Tibial artery (tissue), 4 donors: ENCODE measurements at regions of chr9 and their contacts with region 1.

Region 1: GRCh38 chr9:83336706-83337105 is 201.5 kb downstream of the FRMD3 start:
- DNase-seq: no peak
- H3K4me3 ChIP-seq: no peak overlapping the region
- H3K27ac ChIP-seq: no peak overlapping the region
- H3K4me1 ChIP-seq: peaks cover 0 to 16% (median 0%) of the 10 kb centered on the region in 4 donors
- H3K27me3 ChIP-seq: no peaks in the 10 kb centered on the region
- CTCF ChIP-seq: no peak

Region 2: DNA sequence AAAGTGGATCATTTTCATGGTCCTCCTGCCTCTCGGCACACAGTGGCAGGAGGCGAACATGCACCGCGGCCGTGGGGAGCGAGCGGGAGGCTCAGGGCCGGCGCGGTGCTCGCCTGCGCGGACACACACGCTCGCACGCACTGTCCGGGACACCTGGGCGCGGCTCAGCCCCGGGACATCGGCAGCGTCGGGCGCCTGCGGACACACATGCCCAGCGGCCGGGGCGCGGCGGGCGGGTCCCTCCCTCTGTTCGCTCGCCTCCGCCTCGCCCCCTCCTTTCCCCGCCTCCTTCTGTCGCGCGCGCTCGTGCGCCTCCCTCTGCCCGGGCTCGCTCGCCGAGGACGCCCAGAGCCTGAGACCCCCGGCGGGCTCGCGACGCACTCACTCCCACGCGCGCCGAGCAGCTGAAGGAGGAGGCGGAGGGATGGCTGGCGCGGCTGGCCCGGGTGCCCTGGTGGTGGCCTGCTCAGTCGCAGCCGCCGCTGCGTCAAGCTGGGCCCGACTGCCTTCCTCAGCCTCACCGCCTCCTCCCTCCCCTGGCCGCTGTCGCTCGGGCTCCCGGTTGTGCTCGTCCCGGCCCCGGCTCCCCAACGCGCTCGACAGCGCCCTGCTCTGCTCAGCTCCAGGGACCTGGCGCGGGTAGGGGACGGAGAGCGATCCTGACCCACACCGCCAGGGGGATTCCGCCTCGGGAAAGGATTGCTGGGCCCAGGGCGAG is 201.6 kb after region 1 on chr9 and contains the start of gene FRMD3:
- intact Hi-C with region 1: loop called (anchors 2 kb)
- DNase-seq: peak; percentile 72 to 86
- H3K4me3 ChIP-seq: peak within 1 kb of the TSS; percentile 54 to 76
- H3K27ac ChIP-seq: peak within 1 kb of the TSS; percentile 53 to 59
- H3K4me1 ChIP-seq: peaks cover 0 to 24% (median 17%) of the 10 kb centered on the region in 4 donors
- H3K27me3 ChIP-seq: peaks cover 0 to 4% of the 10 kb centered on the region in 2 donors
- CTCF ChIP-seq: peak; percentile 76 to 79